ENCODE measurements at regions of chr18 and their contacts with region 1.

Region 1: GRCh38 chr18:14086458-14087231 is 45.6 kb downstream of the ZNF519 start:
- DNase-seq: no peak
- ATAC-seq: peak in 5 of 8 donors; percentile 42 to 72 (median 69)
- H3K4me3 ChIP-seq: no peak overlapping the region
- H3K27ac ChIP-seq: no peak overlapping the region
- H3K4me1 ChIP-seq: no peaks in the 10 kb centered on the region
- H3K27me3 ChIP-seq: no peaks in the 10 kb centered on the region
- CTCF ChIP-seq: peak; percentile 29 to 71 (median 60)

Region 2: GRCh38 chr18:13813271-13813849 is 273.3 kb before region 1 on chr18:
- intact Hi-C with region 1: loop called in 1 of 10 experiments (anchors 10 kb)
- DNase-seq: peak; percentile 29 to 38
- ATAC-seq: peak; percentile 62 to 86 (median 76)
- H3K4me3 ChIP-seq: no peak overlapping the region
- H3K27ac ChIP-seq: no peak overlapping the region
- H3K4me1 ChIP-seq: no peaks in the 10 kb centered on the region
- H3K27me3 ChIP-seq: peaks cover 0 to 4% (median 0%) of the 10 kb centered on the region in 7 donors
- CTCF ChIP-seq: peak; percentile 62 to 89 (median 87)

Region 3: GRCh38 chr18:13823707-13824395 is 262.8 kb before region 1 on chr18 and contains the start of gene MC5R:
- intact Hi-C with region 1: loop called in 9 of 10 experiments (anchors 1 to 10 kb)
- DNase-seq: peak; percentile 32 to 70
- ATAC-seq: peak; percentile 75 to 96 (median 84)
- H3K4me3 ChIP-seq: peak within 1 kb of the TSS; percentile 32 to 57 (median 46)
- H3K27ac ChIP-seq: no peak within 1 kb of the TSS
- H3K4me1 ChIP-seq: peaks cover 0 to 4% (median 0%) of the 10 kb centered on the region in 9 donors
- H3K27me3 ChIP-seq: peaks cover 3 to 58% (median 50%) of the 10 kb centered on the region in 7 donors
- CTCF ChIP-seq: peak; percentile 70 to 87 (median 81)
- total RNA-seq, gene MC5R: not detected

Region 4: GRCh38 chr18:13831864-13832508 is 254.7 kb before region 1 on chr18:
- intact Hi-C with region 1: loop called in 2 of 10 experiments (anchors 5 to 10 kb)
- DNase-seq: no peak
- ATAC-seq: no peak
- H3K4me3 ChIP-seq: no peak overlapping the region
- H3K27ac ChIP-seq: no peak overlapping the region
- H3K4me1 ChIP-seq: no peaks in the 10 kb centered on the region
- H3K27me3 ChIP-seq: peaks cover 0 to 74% (median 47%) of the 10 kb centered on the region in 7 donors
- CTCF ChIP-seq: peak in 2 of 9 donors; percentile 6 to 16

Region 5: DNA sequence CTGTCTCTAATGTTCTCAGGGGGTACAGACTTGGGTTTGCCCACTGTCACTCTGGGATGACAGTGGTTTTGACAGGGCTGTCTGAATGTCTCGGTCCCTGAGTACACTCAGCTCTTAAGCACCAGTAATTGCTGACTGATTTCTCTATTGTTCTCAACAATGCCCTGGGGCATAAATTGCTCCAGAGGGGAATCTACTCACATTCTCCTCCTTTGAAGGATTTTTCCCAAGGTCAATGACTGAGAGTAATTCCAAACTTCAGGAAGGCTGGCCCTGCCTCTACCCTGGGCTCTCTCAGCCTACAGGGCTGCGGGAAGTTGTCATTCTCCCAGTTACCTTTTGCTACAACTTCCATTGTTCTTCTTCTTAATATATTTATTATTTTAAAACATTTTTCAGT is 207.8 kb before region 1 on chr18:
- intact Hi-C with region 1: no loop called
- DNase-seq: no peak
- ATAC-seq: no peak
- H3K4me3 ChIP-seq: no peak overlapping the region
- H3K27ac ChIP-seq: no peak overlapping the region
- H3K4me1 ChIP-seq: no peaks in the 10 kb centered on the region
- H3K27me3 ChIP-seq: peaks cover 0 to 23% (median 8%) of the 10 kb centered on the region in 7 donors
- CTCF ChIP-seq: no peak

Region 6: GRCh38 chr18:14104906-14105748 is 18.5 kb after region 1 on chr18:
- intact Hi-C with region 1: no loop called
- DNase-seq: no peak
- ATAC-seq: no peak
- H3K4me3 ChIP-seq: no peak overlapping the region
- H3K27ac ChIP-seq: no peak overlapping the region
- H3K4me1 ChIP-seq: no peaks in the 10 kb centered on the region
- H3K27me3 ChIP-seq: no peaks in the 10 kb centered on the region
- CTCF ChIP-seq: no peak

Measured in heart right ventricle (tissue), 16 donors.